A673 (cell line): ENCODE measurements at regions of chr20 and their contacts with region 1.

Region 1: GRCh38 chr20:9978397-9979004 is 56.3 kb upstream of the ANKEF1 start:
- DNase-seq: peak; percentile 91
- H3K4me3 ChIP-seq: no peak overlapping the region
- H3K27ac ChIP-seq: no peak overlapping the region
- H3K4me1 ChIP-seq: peaks cover 9% of the 10 kb centered on the region
- H3K27me3 ChIP-seq: no peaks in the 10 kb centered on the region
- CTCF ChIP-seq: peak; percentile 93

Region 2: GRCh38 chr20:9517297-9518162 is 461.0 kb before region 1 on chr20:
- CTCF ChIA-PET with region 1: no interaction called
- POLR2A ChIA-PET with region 1: no interaction called
- intact Hi-C with region 1: no loop called
- DNase-seq: no peak
- H3K4me3 ChIP-seq: no peak overlapping the region
- H3K27ac ChIP-seq: no peak overlapping the region
- H3K4me1 ChIP-seq: no peaks in the 10 kb centered on the region
- H3K27me3 ChIP-seq: peaks cover 56% of the 10 kb centered on the region
- CTCF ChIP-seq: no peak

Region 3: GRCh38 chr20:10219452-10219791 is 240.9 kb after region 1 on chr20:
- CTCF ChIA-PET with region 1: interaction called, 3 read pairs
- POLR2A ChIA-PET with region 1: no interaction called
- intact Hi-C with region 1: loop called (anchors 5 kb)
- DNase-seq: peak; percentile 92
- H3K4me3 ChIP-seq: peak overlapping the region; percentile 70
- H3K27ac ChIP-seq: peak overlapping the region; percentile 64
- H3K4me1 ChIP-seq: peaks cover 16% of the 10 kb centered on the region
- H3K27me3 ChIP-seq: peaks cover 17% of the 10 kb centered on the region
- CTCF ChIP-seq: no peak

Region 4: DNA sequence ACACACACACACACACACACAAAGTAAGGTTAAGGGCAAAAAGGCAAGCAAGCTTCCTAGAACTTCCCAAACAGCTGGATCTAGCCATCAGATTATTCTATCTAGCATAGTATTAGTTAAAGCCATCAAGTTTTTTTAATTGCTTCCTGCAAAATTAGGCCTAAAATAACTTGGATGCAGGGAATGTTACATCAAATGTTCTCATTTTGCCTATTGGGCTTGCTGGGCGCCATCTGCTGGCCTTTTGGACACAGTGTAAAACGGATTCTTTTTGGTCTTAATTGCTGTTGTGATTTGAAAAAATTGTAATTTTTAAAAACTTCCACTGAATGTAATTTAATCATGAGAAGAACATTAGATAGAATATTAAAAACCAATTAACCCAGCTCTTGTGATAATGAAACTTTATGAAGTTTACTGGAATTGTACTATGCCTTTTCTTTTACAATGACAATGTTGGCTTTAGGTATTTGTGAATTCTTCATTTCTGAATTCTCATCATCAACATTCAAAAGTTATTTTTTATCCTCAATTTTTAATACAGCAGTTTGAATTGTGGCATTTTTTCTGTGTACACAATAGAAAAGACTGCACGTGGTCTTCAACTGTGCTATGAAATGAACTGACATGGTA is 448.7 kb after region 1 on chr20:
- CTCF ChIA-PET with region 1: interaction called, 3 read pairs
- POLR2A ChIA-PET with region 1: no interaction called
- intact Hi-C with region 1: loop called (anchors 1 kb)
- DNase-seq: peak; percentile 81
- H3K4me3 ChIP-seq: no peak overlapping the region
- H3K27ac ChIP-seq: peak overlapping the region; percentile 21
- H3K4me1 ChIP-seq: peaks cover 49% of the 10 kb centered on the region
- H3K27me3 ChIP-seq: no peaks in the 10 kb centered on the region
- CTCF ChIP-seq: peak; percentile 96

Region 5: DNA sequence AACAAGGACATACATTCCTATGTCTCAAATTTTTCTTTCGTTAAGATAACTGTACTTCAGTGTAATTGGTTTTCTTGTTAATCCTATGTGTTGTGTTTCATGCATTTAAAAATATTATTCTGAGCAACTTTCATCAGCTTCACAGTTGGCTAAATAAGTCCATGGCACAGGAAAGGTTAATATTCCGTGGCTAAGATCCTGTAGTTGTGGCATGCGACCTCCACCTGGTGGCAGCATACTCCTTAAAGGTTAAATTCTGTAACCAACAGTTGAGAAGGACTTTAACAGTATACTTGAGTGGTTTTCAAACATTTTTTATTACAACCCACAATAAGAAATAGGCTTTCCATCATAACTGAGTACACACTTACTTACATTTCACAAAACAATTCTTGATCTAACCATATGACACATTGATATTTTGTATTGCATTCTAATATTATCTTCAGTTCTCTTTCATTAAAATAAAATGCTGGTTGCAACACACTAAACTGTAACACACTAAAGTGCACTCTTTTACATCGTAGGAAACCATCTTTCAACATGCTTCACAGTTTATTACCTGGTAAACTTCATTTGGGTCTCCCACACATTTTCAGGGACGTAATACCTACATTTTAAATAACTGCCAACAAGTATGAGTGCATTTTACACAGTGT is 575.0 kb after region 1 on chr20:
- CTCF ChIA-PET with region 1: no interaction called
- POLR2A ChIA-PET with region 1: no interaction called
- intact Hi-C with region 1: loop called (anchors 5 kb)
- DNase-seq: peak; percentile 86
- H3K4me3 ChIP-seq: no peak overlapping the region
- H3K27ac ChIP-seq: no peak overlapping the region
- H3K4me1 ChIP-seq: peaks cover 28% of the 10 kb centered on the region
- H3K27me3 ChIP-seq: no peaks in the 10 kb centered on the region
- CTCF ChIP-seq: peak; percentile 89

Region 6: DNA sequence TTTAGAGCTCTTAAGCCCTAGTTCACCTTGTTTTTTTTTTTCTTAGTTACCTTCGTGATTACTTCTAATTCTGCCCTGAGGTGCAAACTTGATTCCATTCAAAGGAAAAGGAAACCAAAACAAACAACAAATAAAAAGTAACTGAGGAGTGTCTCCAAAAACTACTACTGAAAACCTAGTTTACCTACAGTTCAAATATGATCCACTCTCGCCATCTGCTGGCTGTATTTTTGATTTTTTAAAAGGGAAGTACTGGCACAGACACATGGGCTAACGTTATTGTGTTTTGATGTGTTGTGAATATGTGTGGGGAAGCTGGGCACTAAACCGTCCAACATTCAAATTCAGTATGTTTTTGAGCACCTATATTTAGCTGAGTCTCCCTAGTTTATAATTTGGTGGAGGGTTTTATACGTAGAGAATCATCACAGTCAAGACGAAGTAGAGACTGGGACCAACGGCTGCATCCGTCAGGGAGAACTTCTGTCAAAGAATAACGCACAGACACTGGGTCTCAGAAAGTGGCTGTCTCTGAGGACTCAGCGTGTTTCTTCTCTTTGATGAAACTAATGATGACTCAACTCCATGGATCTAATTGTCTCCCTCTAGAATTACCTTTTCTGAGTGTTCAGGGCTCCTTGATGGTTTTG is 1565.7 kb after region 1 on chr20:
- CTCF ChIA-PET with region 1: interaction called, 4 read pairs
- POLR2A ChIA-PET with region 1: no interaction called
- intact Hi-C with region 1: loop called (anchors 1 kb)
- DNase-seq: peak; percentile 85
- H3K4me3 ChIP-seq: no peak overlapping the region
- H3K27ac ChIP-seq: no peak overlapping the region
- H3K4me1 ChIP-seq: peaks cover 7% of the 10 kb centered on the region
- H3K27me3 ChIP-seq: no peaks in the 10 kb centered on the region
- CTCF ChIP-seq: peak; percentile 65